CD4-positive, alpha-beta T cell (primary cell): ENCODE measurements at regions of chr1 and their contacts with region 1.

Region 1: GRCh38 chr1:27489910-27490741 is at the start of gene WASF2:
- DNase-seq: peak; percentile 93 to 98 (median 95)
- ATAC-seq: peak; percentile 95
- H3K4me3 ChIP-seq: peak within 1 kb of the TSS; percentile 100
- H3K4me3 Mint-ChIP-seq: peak within 1 kb of the TSS; percentile 100
- H3K27ac ChIP-seq: peak within 1 kb of the TSS; percentile 73 to 98
- H3K27ac Mint-ChIP-seq: peak within 1 kb of the TSS; percentile 100
- H3K4me1 ChIP-seq: peaks cover 28% of the 10 kb centered on the region
- H3K4me1 Mint-ChIP-seq: peaks cover 29% of the 10 kb centered on the region
- H3K27me3 ChIP-seq: no peaks in the 10 kb centered on the region
- H3K27me3 Mint-ChIP-seq: no peaks in the 10 kb centered on the region
- CTCF ChIP-seq: no peak
- total RNA-seq, gene WASF2: 119 to 121 TPM

Region 2: GRCh38 chr1:27416387-27417111 is 73.6 kb before region 1 on chr1:
- CTCF ChIA-PET with region 1: interaction called, 3 read pairs
- POLR2A ChIA-PET with region 1: interaction called, 11 read pairs
- intact Hi-C with region 1: loop called (anchors 5 kb)
- DNase-seq: peak in 10 of 14 experiments; percentile 28 to 81 (median 49)
- ATAC-seq: peak; percentile 73
- H3K4me3 ChIP-seq: no peak overlapping the region
- H3K4me3 Mint-ChIP-seq: no peak overlapping the region
- H3K27ac ChIP-seq: no peak overlapping the region
- H3K27ac Mint-ChIP-seq: peak overlapping the region; percentile 54
- H3K4me1 ChIP-seq: peaks cover 18% of the 10 kb centered on the region
- H3K4me1 Mint-ChIP-seq: peaks cover 46% of the 10 kb centered on the region
- H3K27me3 ChIP-seq: no peaks in the 10 kb centered on the region
- H3K27me3 Mint-ChIP-seq: no peaks in the 10 kb centered on the region
- CTCF ChIP-seq: peak; percentile 60

Region 3: DNA sequence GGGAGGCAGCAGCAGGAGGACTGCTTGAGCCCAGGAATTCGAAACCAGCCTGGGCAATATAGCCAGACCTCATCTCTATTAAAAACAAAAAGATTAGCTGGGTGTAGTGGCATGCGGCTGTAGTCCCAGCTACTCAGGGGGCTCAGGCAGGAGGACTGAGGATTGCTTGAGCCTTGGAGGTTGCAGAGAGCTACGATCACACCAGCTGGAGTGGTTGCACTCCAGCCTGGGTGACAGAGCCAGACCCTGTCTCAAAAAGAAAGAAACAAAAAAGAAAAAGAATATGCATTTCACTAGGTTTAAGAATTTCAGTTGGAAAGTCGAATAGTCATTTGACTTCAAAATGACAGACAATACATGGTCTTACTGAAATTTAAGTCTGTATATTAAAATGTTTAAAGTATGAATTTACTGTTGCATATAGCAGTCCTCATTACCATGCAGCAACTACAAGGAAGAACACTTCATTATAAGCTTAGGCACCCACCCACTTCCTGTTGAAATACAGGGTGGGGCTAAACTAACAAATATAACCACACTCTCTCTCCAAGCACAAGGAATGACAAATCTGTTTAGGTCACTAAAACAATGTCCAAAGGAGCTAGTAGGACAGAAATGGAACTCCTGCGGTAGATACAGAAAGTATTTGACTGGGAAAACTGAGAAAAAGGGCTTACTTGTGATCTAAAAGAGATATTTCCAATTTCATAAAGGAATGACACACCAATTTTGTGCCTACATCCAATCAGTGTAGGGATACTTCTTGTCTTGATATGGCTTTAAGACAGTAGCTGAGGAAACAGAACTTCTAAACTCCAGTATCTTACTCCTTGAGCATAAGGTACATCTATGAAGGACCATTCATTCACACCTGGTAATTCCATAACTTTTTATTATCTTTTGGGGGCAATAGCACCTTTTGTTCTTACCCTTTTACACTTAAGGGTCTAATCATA is 53.6 kb before region 1 on chr1:
- CTCF ChIA-PET with region 1: interaction called, 3 read pairs
- POLR2A ChIA-PET with region 1: interaction called, 23 read pairs
- intact Hi-C with region 1: loop called in 1 of 2 experiments (anchors 5 kb)
- DNase-seq: peak in 4 of 14 experiments; percentile 34 to 78 (median 64)
- ATAC-seq: peak; percentile 96
- H3K4me3 ChIP-seq: peak overlapping the region; percentile 21
- H3K4me3 Mint-ChIP-seq: peak overlapping the region; percentile 73
- H3K27ac ChIP-seq: peak overlapping the region; percentile 54 to 65
- H3K27ac Mint-ChIP-seq: peak overlapping the region; percentile 80
- H3K4me1 ChIP-seq: peaks cover 69% of the 10 kb centered on the region
- H3K4me1 Mint-ChIP-seq: peaks cover 75% of the 10 kb centered on the region
- H3K27me3 ChIP-seq: no peaks in the 10 kb centered on the region
- H3K27me3 Mint-ChIP-seq: no peaks in the 10 kb centered on the region
- CTCF ChIP-seq: no peak

Region 4: DNA sequence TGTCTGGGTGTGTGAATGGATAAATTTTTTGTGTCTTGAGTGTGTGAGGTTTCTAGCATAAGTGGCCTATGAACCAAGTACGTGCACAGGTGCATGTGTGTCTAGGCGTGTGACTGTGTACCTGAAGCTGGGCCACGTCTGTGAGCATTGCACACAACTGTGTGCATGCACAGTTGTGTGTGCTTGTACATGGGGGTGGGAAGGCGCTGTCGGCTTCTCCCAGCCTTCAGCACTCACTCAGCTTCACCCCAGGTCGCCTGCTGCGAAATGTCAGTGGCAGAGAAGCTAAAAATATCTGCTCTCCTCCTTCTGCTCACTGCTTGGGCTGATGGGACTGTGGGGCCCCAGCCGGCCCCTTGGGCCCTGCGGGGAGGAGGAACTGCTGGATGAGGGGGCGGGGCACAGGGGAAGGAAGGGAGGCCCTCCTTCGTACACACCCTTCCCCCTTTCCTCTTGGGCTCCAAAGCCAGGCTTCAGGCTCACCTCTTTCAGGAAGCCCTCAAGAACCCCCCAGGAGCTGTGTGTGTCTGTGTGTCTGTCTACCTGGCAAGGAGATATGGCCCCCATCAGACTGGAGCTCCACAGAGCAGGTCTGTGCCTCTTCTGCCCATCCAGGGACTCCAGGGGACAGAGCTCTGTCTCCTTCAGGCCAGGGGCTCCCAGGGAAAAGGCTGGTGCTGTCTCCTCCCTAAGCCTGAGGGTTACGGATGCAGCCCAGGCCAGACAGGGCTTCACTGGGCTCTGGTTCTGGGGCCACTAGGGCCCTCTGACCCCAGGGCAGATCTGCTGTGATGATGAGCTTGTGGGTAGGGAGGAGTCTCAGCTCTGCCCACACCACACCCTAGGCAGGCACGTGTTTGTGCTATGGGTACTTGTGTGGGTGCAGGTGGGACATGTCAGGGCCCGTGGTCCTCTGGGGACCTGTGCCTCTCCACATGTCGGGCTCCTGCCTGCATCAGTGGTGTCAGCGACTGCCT is 35.5 kb after region 1 on chr1:
- CTCF ChIA-PET with region 1: interaction called, 4 read pairs
- POLR2A ChIA-PET with region 1: interaction called, 29 read pairs
- intact Hi-C with region 1: loop called (anchors 1 to 2 kb)
- DNase-seq: peak in 12 of 14 experiments; percentile 18 to 73 (median 53)
- ATAC-seq: peak; percentile 7
- H3K4me3 ChIP-seq: peak overlapping the region; percentile 45
- H3K4me3 Mint-ChIP-seq: peak overlapping the region; percentile 68
- H3K27ac ChIP-seq: peak overlapping the region; percentile 30 to 75
- H3K27ac Mint-ChIP-seq: peak overlapping the region; percentile 96
- H3K4me1 ChIP-seq: peaks cover 82% of the 10 kb centered on the region
- H3K4me1 Mint-ChIP-seq: peaks cover 85% of the 10 kb centered on the region
- H3K27me3 ChIP-seq: no peaks in the 10 kb centered on the region
- H3K27me3 Mint-ChIP-seq: no peaks in the 10 kb centered on the region
- CTCF ChIP-seq: no peak

Region 5: DNA sequence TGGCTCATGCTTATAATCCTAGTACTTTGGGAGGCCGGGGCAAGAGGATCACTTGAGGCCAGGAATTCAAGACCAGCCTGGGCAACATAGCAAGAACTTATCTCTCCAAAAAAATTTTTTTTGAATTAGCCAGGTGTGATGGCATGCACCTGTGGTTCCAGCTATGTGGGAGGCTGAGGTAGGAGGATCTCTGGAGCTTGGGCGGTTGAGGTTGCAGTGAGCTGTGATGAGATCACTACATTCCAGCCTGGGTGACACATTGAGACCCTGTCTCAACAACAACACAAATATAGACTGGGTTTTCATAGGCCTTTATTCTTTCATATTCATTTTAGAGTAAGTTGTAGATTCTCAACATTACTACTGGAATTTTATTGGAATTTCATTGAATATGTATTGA is 851.5 kb after region 1 on chr1:
- CTCF ChIA-PET with region 1: no interaction called
- POLR2A ChIA-PET with region 1: no interaction called
- intact Hi-C with region 1: no loop called
- DNase-seq: no peak
- ATAC-seq: no peak
- H3K4me3 ChIP-seq: no peak overlapping the region
- H3K4me3 Mint-ChIP-seq: no peak overlapping the region
- H3K27ac ChIP-seq: no peak overlapping the region
- H3K27ac Mint-ChIP-seq: no peak overlapping the region
- H3K4me1 ChIP-seq: no peaks in the 10 kb centered on the region
- H3K4me1 Mint-ChIP-seq: no peaks in the 10 kb centered on the region
- H3K27me3 ChIP-seq: no peaks in the 10 kb centered on the region
- H3K27me3 Mint-ChIP-seq: no peaks in the 10 kb centered on the region
- CTCF ChIP-seq: no peak